GM10248 (cell line): ENCODE measurements at regions of chr13 and their contacts with region 1.

Region 1: GRCh38 chr13:52686381-52686780 is 33.7 kb downstream of the SUGT1 start:
- DNase-seq: no peak
- CTCF ChIP-seq: no peak

Region 2: GRCh38 chr13:52665325-52665724 is 21.1 kb before region 1 on chr13:
- CTCF ChIA-PET with region 1: interaction called, 10 read pairs
- POLR2A ChIA-PET with region 1: no interaction called
- DNase-seq: peak; percentile 20
- CTCF ChIP-seq: peak; percentile 37

Region 3: GRCh38 chr13:52842441-52842840 is 156.1 kb after region 1 on chr13:
- CTCF ChIA-PET with region 1: no interaction called
- POLR2A ChIA-PET with region 1: no interaction called
- DNase-seq: no peak
- CTCF ChIP-seq: no peak

Region 4: GRCh38 chr13:53672005-53672404 is 985.6 kb after region 1 on chr13:
- CTCF ChIA-PET with region 1: no interaction called
- POLR2A ChIA-PET with region 1: no interaction called
- DNase-seq: no peak
- CTCF ChIP-seq: no peak